GM13977 (cell line): ENCODE measurements at regions of chr2 and their contacts with region 1.

Region 1: DNA sequence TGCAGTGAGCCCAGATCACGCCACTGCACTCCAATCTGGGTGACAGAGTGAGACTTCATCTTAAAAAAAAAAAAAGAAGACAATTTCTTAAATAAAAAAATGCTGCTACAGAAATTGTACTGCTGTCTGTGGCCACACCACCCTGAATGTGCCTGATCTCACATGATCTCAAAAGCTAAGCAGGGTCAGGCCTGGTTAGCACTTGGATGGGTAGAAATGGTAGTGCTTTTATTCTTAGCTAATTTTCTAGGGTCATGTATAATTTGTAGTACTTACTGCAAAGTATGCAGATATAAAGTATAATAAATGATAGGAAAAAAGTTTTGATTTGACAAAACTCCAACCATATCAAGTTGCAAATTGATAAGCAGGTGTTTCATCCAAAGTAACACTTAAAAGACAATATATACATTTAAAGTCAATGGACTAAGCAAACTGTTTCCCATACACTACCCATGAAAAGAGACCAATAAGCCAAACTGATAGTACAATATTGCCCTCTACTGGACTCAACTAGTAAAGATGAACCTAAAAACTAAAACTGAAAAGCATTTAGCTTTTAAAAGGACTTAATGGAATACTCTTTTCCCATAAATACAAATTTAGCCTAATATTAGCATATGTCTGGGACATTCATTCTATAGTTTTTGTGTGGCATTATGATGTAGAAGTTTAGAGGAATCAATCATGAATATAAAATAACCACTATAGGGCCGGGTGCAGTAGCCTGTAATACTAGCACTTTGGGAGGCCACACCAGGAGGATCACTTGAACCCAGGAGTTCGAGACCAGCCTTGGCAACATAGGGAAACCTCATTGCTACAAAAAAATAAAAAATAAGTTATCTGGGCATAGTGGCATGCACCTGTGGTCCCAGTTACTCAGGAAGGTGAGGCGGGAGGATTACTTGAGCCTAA is 18.6 kb upstream of the PEX13 start:
- DNase-seq: peak; percentile 45
- CTCF ChIP-seq: peak; percentile 58

Region 2: DNA sequence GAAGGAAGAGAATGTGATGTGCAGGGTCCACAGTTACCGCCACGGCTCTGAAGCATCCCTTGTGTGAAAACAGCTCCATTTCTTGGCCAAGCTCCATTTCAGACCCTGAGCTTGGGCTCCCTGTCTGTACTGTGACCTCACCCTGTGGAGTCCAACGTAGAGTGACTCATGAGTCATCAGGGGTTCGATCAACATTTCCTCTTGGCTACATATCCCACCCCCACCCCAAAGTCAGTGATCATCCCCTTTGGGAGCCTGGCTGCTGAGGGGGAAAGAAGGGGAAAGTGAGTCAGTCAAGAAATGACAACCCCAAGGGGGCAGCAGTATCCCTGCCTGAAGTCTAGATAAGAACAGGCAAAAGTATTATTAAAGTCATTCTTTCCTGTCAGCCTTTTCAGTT is 180.6 kb before region 1 on chr2:
- in situ Hi-C with region 1: loop called (anchors 10 kb)
- DNase-seq: no peak
- CTCF ChIP-seq: peak; percentile 48